Activated CD8-positive, alpha-beta T cell treated with anti-CD3 and anti-CD28 coated beads for 36 hours (primary cell): ENCODE measurements at regions of chr12 and their contacts with region 1.

Region 1: DNA sequence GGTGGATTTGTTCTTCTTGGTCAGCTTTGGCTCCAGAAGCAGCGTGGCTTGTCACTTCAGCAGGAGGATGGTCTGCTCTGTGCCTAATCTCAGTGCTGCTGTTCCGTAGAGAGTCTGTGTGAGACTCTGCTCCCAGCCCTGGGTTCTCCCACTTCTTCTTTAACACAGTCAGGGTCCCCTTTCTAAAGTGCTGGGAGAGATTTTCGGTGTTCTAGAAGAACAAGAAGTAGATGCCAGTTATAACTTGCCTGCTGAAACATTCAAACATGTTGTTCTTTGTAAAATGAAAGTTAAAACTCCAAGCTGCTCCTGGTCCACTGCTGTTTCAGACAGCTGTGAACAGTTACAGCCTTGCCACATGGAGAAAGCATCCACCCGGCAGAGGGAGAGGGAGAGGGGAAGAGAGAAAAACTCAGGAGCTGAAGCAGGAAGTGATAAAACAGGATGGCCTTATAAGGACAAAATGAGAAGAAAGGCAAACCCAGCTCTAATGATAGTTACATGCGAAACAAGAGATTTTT is 55.2 kb upstream of the CERS5 start:
- DNase-seq: no peak
- ATAC-seq: no peak
- H3K4me3 Mint-ChIP-seq: no peak overlapping the region
- H3K27ac Mint-ChIP-seq: no peak overlapping the region
- H3K4me1 Mint-ChIP-seq: peaks cover 35% of the 10 kb centered on the region
- H3K27me3 Mint-ChIP-seq: no peaks in the 10 kb centered on the region
- CTCF ChIP-seq: no peak

Region 2: GRCh38 chr12:50016501-50017475 is 205.5 kb before region 1 on chr12:
- CTCF ChIA-PET with region 1: no interaction called
- POLR2A ChIA-PET with region 1: no interaction called
- intact Hi-C with region 1: no loop called
- DNase-seq: no peak
- ATAC-seq: no peak
- H3K4me3 Mint-ChIP-seq: no peak overlapping the region
- H3K27ac Mint-ChIP-seq: no peak overlapping the region
- H3K4me1 Mint-ChIP-seq: peaks cover 17% of the 10 kb centered on the region
- H3K27me3 Mint-ChIP-seq: no peaks in the 10 kb centered on the region
- CTCF ChIP-seq: no peak

Region 3: GRCh38 chr12:50077910-50078680 is 144.2 kb before region 1 on chr12:
- CTCF ChIA-PET with region 1: no interaction called
- POLR2A ChIA-PET with region 1: no interaction called
- intact Hi-C with region 1: no loop called
- DNase-seq: no peak
- ATAC-seq: no peak
- H3K4me3 Mint-ChIP-seq: no peak overlapping the region
- H3K27ac Mint-ChIP-seq: no peak overlapping the region
- H3K4me1 Mint-ChIP-seq: peaks cover 6% of the 10 kb centered on the region
- H3K27me3 Mint-ChIP-seq: no peaks in the 10 kb centered on the region
- CTCF ChIP-seq: no peak

Region 4: DNA sequence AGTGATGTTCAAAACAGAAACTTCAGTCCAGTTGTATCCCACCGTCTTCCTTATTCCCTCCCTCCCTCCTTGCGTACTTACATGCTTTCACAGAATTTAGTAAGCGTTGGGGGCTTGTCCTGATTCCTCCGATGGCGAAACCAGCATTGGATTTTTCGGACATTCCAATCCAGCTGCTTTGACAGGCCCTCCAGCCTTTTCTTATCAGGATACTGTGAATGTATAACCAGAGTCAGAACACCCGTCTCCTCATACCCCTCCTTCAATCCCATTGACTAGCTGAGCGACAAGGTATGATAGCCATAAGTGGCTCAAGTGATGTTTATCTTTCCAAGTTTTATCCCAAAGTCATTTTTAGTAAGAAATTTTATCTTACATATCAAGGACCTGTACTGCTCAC is 79.3 kb before region 1 on chr12:
- CTCF ChIA-PET with region 1: no interaction called
- POLR2A ChIA-PET with region 1: no interaction called
- intact Hi-C with region 1: no loop called
- DNase-seq: no peak
- ATAC-seq: no peak
- H3K4me3 Mint-ChIP-seq: no peak overlapping the region
- H3K27ac Mint-ChIP-seq: no peak overlapping the region
- H3K4me1 Mint-ChIP-seq: peaks cover 4% of the 10 kb centered on the region
- H3K27me3 Mint-ChIP-seq: no peaks in the 10 kb centered on the region
- CTCF ChIP-seq: no peak

Region 5: DNA sequence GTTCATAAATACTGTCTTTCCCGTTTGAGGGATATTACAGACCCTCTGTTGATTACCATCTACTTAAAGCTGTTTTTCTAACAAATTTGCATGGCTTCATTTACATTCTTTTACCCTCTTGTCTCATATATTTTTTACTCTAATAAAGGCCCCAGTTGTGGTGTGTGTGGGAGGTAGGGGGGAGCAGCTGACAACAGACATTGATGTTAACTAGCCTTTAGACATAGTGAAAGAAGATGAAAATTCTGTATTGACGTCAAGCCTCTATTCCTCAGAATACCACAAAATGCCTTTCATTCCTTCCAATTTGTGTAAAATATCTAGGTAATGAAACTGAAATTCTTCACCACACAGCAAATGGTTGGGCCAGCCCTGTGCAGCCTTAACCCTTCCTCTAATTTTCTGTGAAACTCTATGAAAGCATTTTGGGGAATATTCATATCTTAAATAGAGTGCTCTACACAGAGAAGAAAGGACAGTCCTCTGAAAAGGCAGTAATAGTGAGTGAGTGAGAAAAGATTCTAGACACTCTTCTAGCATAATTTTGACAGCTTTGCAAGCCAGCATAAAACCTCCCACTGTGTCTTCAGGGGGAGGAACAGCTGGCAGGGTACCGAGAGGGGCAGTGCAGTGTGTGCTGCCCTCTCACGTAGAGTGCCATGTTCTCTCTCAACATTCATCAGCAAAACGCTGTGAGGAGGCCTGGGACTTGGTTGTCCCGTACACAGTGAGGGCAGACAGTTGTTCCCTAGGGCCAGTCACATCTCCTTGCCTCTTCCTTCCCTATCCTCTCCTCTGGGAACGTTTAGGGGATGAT is 35.0 kb before region 1 on chr12:
- CTCF ChIA-PET with region 1: interaction called, 8 read pairs
- POLR2A ChIA-PET with region 1: interaction called, 11 read pairs
- intact Hi-C with region 1: no loop called
- DNase-seq: peak; percentile 84
- ATAC-seq: peak; percentile 82
- H3K4me3 Mint-ChIP-seq: peak overlapping the region; percentile 19
- H3K27ac Mint-ChIP-seq: peak overlapping the region; percentile 92
- H3K4me1 Mint-ChIP-seq: peaks cover 50% of the 10 kb centered on the region
- H3K27me3 Mint-ChIP-seq: no peaks in the 10 kb centered on the region
- CTCF ChIP-seq: no peak

Region 6: GRCh38 chr12:50211392-50212070 is 10.8 kb before region 1 on chr12:
- CTCF ChIA-PET with region 1: interaction called, 15 read pairs
- POLR2A ChIA-PET with region 1: interaction called, 5 read pairs
- intact Hi-C with region 1: no loop called
- DNase-seq: no peak
- ATAC-seq: peak; percentile 42
- H3K4me3 Mint-ChIP-seq: peak overlapping the region; percentile 34
- H3K27ac Mint-ChIP-seq: peak overlapping the region; percentile 90
- H3K4me1 Mint-ChIP-seq: peaks cover 35% of the 10 kb centered on the region
- H3K27me3 Mint-ChIP-seq: no peaks in the 10 kb centered on the region
- CTCF ChIP-seq: no peak

Region 7: GRCh38 chr12:50283229-50283923 is 61.0 kb after region 1 on chr12 and contains the start of gene LIMA1:
- CTCF ChIA-PET with region 1: interaction called, 22 read pairs
- POLR2A ChIA-PET with region 1: no interaction called
- intact Hi-C with region 1: loop called (anchors 5 kb)
- DNase-seq: peak; percentile 94
- ATAC-seq: peak; percentile 95
- H3K4me3 Mint-ChIP-seq: peak within 1 kb of the TSS; percentile 88
- H3K27ac Mint-ChIP-seq: peak within 1 kb of the TSS; percentile 81
- H3K4me1 Mint-ChIP-seq: peaks cover 22% of the 10 kb centered on the region
- H3K27me3 Mint-ChIP-seq: no peaks in the 10 kb centered on the region
- CTCF ChIP-seq: peak; percentile 44
- total RNA-seq, gene LIMA1: 44.2 to 45.5 TPM

Region 8: DNA sequence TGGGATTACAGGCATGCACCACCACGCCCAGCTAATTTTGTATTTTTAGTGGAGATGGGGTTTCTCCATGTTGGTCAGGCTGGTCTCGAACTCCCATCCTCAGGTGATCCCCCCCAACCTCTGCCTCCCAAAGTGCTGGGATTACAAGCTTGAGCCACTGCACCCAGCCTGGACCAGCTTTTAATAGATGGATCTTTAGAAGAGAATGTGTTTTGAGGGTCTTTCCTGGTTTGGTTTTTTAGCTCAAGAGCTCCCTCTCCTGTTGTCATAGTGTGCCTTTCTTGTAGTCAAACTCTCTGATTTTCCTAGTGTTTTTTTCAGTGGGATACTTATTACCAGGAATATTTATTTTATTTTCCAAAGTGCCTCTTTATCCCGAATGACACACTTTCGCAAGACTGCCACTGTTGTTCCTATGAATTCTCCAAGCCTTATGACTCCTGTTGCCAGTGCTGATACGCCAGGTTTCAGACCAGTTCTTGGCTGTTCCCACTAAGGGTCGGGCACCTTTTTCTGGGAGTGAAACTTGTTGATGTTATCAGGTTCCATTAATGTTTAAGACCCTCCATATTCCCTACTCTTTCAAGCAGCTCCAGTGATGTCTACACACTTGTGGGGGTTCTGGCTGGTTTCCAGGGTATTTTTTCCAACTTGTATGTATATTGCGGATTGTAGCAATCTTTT is 92.4 kb after region 1 on chr12:
- CTCF ChIA-PET with region 1: interaction called, 13 read pairs
- POLR2A ChIA-PET with region 1: no interaction called
- intact Hi-C with region 1: no loop called
- DNase-seq: no peak
- ATAC-seq: no peak
- H3K4me3 Mint-ChIP-seq: no peak overlapping the region
- H3K27ac Mint-ChIP-seq: no peak overlapping the region
- H3K4me1 Mint-ChIP-seq: peaks cover 2% of the 10 kb centered on the region
- H3K27me3 Mint-ChIP-seq: no peaks in the 10 kb centered on the region
- CTCF ChIP-seq: peak; percentile 70

Region 9: DNA sequence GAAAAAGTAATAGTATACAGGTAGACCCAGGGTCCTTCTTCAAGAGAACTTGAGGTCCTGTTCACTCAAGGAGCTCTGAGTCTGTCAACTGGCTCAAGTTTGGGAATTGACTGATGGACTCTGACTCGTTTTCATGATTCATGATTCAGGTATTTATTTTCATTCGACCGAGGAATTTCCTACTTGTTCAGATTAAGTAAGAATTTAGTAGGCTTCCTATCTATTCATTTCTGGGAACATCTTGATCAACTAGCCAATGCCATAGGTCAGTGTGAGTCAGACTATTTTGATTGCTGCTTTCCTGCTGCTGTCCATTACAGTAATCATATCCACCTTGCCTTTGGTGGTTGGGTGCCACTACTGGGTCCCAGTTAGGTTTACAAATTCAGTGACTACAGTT is 167.9 kb after region 1 on chr12:
- CTCF ChIA-PET with region 1: no interaction called
- POLR2A ChIA-PET with region 1: no interaction called
- intact Hi-C with region 1: no loop called
- DNase-seq: no peak
- ATAC-seq: no peak
- H3K4me3 Mint-ChIP-seq: no peak overlapping the region
- H3K27ac Mint-ChIP-seq: no peak overlapping the region
- H3K4me1 Mint-ChIP-seq: no peaks in the 10 kb centered on the region
- H3K27me3 Mint-ChIP-seq: no peaks in the 10 kb centered on the region
- CTCF ChIP-seq: no peak